Esophagus muscularis mucosa (tissue), 4 donors: ENCODE measurements at regions of chr15 and their contacts with region 1.

Region 1: DNA sequence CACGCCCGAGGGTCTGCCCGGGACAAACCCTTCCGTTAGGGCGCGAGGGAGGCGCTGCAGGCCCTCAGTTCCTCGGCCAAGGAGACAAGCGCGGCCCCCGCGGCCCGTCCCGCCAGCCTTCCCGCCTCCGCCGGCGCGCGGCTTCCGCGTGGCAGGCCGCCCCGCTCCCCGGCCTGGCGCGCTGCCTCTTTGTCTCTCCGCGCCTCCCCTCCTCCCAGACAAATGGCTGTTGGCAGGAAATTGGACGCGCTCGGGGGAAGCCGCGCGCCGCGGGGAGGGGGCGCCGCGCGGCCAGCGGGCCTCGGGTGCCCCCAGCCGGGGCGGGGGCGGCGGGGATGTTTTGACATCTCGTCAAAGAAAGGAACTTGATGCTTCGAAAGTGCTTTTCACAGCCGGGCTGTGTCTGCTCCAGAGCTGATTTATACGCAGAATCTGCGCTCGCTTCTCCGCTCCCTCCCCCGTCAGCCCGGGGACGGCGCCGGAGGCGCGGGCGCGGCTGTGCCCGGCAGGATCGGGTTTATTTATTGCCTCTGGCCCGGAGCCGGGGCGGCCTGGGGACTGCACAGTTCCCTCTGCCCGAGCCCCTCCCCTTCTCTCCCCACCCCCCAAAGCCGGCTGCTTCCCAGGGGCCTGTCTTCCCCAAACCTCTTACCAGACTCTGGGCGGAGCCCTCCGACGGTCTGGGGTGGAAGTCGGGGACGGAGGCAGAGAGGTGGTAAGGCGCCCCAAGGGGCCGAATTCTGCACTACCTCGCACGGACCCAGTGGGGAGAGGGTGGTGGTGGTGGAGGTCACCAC is 20.7 kb downstream of the SHF start:
- DNase-seq: peak; percentile 95
- H3K4me3 ChIP-seq: peak overlapping the region; percentile 69 to 87 (median 82)
- H3K27ac ChIP-seq: peak overlapping the region; percentile 98 to 100 (median 98)
- H3K4me1 ChIP-seq: peaks cover 17 to 47% (median 37%) of the 10 kb centered on the region in 4 donors
- H3K27me3 ChIP-seq: no peaks in the 10 kb centered on the region
- CTCF ChIP-seq: peak; percentile 30 to 78 (median 46)
- EP300 ChIP-seq: no peak
- POLR2A ChIP-seq: no peak

Region 2: GRCh38 chr15:45279024-45279698 is 112.1 kb after region 1 on chr15:
- intact Hi-C with region 1: loop called (anchors 2 kb)
- DNase-seq: peak; percentile 100
- H3K4me3 ChIP-seq: peak overlapping the region; percentile 63 to 82 (median 66)
- H3K27ac ChIP-seq: peak overlapping the region; percentile 82 to 88 (median 87)
- H3K4me1 ChIP-seq: peaks cover 10 to 17% (median 15%) of the 10 kb centered on the region in 4 donors
- H3K27me3 ChIP-seq: no peaks in the 10 kb centered on the region
- CTCF ChIP-seq: no peak
- EP300 ChIP-seq: no peak
- POLR2A ChIP-seq: peak; percentile 63

Region 3: DNA sequence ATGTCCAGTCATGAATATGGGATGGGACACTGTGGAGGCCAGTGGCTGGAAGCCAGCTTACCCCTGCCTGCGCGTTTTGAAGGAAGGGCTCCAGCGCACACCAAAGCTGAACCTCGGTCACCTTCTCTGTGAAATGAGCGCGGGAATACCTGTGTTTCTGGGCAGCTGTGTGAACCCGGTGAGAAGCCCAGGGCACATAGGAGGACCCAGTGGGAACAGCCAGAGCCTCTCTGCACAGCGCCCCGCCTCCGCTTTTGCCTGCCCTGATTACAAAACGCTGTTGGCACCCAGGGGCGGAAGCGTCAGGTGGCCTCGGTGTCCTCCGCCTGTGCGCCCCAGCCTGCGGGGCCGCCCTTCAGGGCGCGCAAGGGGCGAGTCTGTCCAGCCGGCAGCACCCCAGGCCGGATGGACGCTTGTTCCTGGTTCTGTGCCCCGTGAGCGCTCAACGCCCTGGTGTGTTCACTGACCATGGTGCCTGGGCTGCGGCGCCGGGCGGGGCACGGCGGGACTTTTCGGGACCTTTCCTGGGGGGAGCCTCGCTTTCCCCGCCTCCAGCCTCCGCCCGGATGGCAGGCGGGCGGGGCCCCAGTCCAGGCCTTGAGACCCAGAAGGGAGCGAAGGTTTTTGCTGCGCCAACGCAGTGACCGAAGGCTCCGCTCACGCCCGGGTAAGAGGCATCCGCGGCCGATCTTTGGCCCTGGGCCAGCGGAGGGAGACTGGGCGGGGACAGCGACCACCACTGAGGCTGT is 467.6 kb after region 1 on chr15 and contains the start of gene SQOR:
- intact Hi-C with region 1: no loop called
- DNase-seq: peak; percentile 96
- H3K4me3 ChIP-seq: peak within 1 kb of the TSS; percentile 72 to 97 (median 78)
- H3K27ac ChIP-seq: peak within 1 kb of the TSS; percentile 89 to 97 (median 92)
- H3K4me1 ChIP-seq: peaks cover 28 to 53% (median 47%) of the 10 kb centered on the region in 4 donors
- H3K27me3 ChIP-seq: no peaks in the 10 kb centered on the region
- CTCF ChIP-seq: no peak
- EP300 ChIP-seq: no peak
- POLR2A ChIP-seq: peak; percentile 66
- total RNA-seq, gene SQOR: 49.8 to 80.4 (median 67.8) TPM